Breast epithelium (tissue), 4 donors: ENCODE measurements at regions of chr12 and their contacts with region 1.

Region 1: GRCh38 chr12:96399919-96400797 is at the start of gene CDK17:
- DNase-seq: peak; percentile 66 to 77
- H3K4me3 ChIP-seq: peak within 1 kb of the TSS; percentile 84 to 96 (median 96)
- H3K27ac ChIP-seq: peak within 1 kb of the TSS; percentile 98 to 100
- H3K4me1 ChIP-seq: peaks cover 0 to 3% of the 10 kb centered on the region in 2 donors
- H3K27me3 ChIP-seq: no peaks in the 10 kb centered on the region
- CTCF ChIP-seq: peak in 1 of 3 donors; percentile 16
- POLR2A ChIP-seq: peak; percentile 50
- total RNA-seq, gene CDK17: 47.7 to 113 (median 81.0) TPM

Region 2: GRCh38 chr12:96054244-96054610 is 345.9 kb before region 1 on chr12:
- intact Hi-C with region 1: loop called (anchors 10 kb)
- DNase-seq: no peak
- H3K4me3 ChIP-seq: no peak overlapping the region
- H3K27ac ChIP-seq: no peak overlapping the region
- H3K4me1 ChIP-seq: no peaks in the 10 kb centered on the region
- H3K27me3 ChIP-seq: no peaks in the 10 kb centered on the region
- CTCF ChIP-seq: no peak
- POLR2A ChIP-seq: no peak

Region 3: DNA sequence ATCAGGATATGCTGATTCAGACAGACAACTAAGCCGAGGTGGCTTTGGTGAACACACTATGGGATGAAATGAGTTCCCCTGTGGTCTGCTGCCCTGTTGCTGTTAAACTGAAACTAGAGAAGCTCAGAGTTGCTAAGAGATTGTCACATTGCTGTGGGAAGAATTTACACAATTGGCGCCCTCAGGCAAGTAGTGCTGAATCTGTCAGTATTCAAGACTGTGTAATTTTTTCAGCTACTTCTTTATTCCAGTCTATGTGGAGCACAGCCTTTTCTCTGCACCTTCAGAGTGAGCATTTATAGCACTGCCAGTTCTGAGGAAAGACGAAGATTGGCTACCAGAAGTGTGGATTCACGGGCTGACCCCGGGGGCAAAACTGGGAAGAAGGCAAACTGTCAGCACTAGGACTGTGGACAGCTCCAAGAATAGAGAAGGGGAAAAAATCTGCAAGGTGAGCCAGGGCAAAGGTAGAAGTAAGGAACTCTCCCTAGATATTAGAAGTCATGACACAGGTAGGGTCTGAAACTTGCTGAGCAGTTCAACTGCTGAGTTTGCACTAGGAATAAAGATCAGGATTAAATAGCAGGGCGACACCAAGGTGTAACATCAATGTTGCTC is 1896.4 kb after region 1 on chr12:
- intact Hi-C with region 1: no loop called
- DNase-seq: no peak
- H3K4me3 ChIP-seq: no peak overlapping the region
- H3K27ac ChIP-seq: no peak overlapping the region
- H3K4me1 ChIP-seq: no peaks in the 10 kb centered on the region
- H3K27me3 ChIP-seq: no peaks in the 10 kb centered on the region
- CTCF ChIP-seq: no peak
- POLR2A ChIP-seq: no peak